ENCODE measurements at regions of chr20 and their contacts with region 1.

Region 1: GRCh38 chr20:63381807-63382322 is 20.7 kb upstream of the CHRNA4 start:
- DNase-seq: no peak
- H3K4me3 ChIP-seq: no peak overlapping the region
- H3K27ac ChIP-seq: no peak overlapping the region
- H3K4me1 ChIP-seq: no peaks in the 10 kb centered on the region
- H3K27me3 ChIP-seq: peaks cover 20% of the 10 kb centered on the region
- CTCF ChIP-seq: peak; percentile 84 to 90 (median 88)
- POLR2A ChIP-seq: no peak

Region 2: DNA sequence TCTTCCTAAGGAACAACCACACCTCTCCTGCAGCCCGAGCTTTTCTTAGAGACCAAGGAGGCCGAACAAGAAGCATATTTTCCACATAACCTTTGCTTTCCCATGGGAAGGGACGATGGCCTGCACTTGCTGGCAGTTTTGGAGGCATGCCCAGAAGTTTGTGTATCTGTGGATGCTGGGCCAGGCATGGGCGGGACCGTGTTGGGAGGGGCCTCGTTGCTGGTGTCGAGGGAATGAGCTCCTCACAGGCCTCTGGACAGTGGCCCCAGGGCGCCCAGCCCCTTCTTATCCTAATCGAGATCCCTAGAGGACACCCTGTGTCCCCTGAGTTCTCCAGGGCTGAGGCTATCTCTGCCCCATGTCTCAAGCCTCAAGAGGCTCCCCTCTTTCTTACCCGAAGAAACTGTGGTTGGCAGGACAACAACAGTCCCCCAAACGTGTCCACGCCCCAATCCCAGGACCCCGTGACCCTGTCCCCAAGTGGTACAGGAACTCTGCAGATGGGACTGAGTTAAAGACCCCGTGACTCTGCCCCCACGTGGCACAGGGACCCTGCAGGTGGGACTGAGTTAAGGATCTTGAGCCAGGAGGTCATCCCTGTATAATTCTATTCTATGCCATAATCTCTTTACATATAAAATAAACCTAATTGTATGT is 275.6 kb before region 1 on chr20:
- intact Hi-C with region 1: no loop called
- DNase-seq: peak; percentile 75
- H3K4me3 ChIP-seq: no peak overlapping the region
- H3K27ac ChIP-seq: no peak overlapping the region
- H3K4me1 ChIP-seq: no peaks in the 10 kb centered on the region
- H3K27me3 ChIP-seq: no peaks in the 10 kb centered on the region
- CTCF ChIP-seq: no peak
- POLR2A ChIP-seq: no peak

Region 3: GRCh38 chr20:63309261-63310071 is 72.4 kb before region 1 on chr20:
- intact Hi-C with region 1: loop called (anchors 2 kb)
- DNase-seq: no peak
- H3K4me3 ChIP-seq: no peak overlapping the region
- H3K27ac ChIP-seq: no peak overlapping the region
- H3K4me1 ChIP-seq: no peaks in the 10 kb centered on the region
- H3K27me3 ChIP-seq: peaks cover 31% of the 10 kb centered on the region
- CTCF ChIP-seq: peak; percentile 73 to 88 (median 82)
- POLR2A ChIP-seq: no peak

Region 4: DNA sequence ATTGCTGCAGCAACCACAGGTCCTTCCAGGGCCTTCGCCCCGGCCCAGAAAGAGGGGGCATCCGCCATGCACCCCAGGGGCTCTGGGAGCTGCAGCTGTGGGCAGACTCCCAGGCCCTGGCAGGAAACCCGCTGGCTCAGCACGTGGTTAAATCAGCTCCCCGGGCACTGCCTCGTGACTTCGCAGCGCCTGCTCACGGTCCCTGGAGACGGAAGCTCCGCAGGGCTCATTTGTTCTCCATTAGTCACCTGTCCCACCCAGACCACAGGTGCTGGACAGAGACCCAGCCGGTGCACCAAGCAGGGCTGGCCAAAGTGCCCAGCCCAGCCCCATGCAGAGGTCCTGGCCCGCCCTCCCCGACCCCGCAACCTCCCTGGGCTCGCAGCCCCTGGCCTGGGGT is 75.9 kb after region 1 on chr20:
- intact Hi-C with region 1: no loop called
- DNase-seq: no peak
- H3K4me3 ChIP-seq: no peak overlapping the region
- H3K27ac ChIP-seq: no peak overlapping the region
- H3K4me1 ChIP-seq: no peaks in the 10 kb centered on the region
- H3K27me3 ChIP-seq: peaks cover 58% of the 10 kb centered on the region
- CTCF ChIP-seq: no peak
- POLR2A ChIP-seq: no peak

Measured in prostate gland (tissue), 2 donors.